ENCODE measurements at regions of chr4 and their contacts with region 1.

Region 1: DNA sequence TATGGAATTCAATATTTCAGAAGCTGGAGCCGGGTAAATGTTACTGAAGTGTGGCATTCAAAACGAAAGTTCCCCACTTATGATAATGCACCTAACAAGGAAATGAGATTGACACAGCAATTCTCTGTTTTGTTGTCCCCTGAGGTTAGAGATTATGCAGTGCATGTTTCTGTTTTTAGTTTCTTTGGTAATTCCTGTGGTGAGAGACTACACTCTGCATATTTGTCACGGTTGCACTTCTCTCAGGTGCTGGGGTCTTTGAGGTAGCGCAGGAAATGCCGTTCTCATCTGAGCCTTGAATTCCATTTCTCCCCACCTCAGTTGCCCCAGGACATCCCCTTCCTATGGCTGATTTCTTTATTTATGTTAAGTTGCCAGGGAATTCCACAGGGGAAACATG is 15.3 kb upstream of the BEND4 start:
- DNase-seq: no peak
- ATAC-seq: no peak
- H3K4me3 ChIP-seq: no peak overlapping the region
- H3K27ac ChIP-seq: no peak overlapping the region
- H3K4me1 ChIP-seq: no peaks in the 10 kb centered on the region
- H3K27me3 ChIP-seq: no peaks in the 10 kb centered on the region
- CTCF ChIP-seq: no peak

Region 2: DNA sequence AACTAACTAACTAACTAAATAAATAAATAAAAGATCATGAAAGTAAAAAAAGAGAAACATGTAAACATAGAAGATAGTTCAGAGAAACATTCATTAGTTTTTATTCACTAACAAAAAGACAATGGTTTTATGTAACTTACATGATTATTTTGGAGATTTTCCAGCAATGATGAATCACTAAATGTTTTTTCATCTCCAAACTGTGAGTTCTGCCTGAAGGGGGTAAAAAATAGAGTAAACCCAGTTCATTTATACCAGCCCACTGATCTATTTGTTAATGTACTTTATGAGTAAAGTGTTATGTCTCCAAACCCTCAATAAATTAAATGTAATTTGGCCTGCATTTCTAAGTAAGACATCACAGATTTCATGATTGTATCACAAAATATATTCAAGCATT is 388.1 kb after region 1 on chr4:
- CTCF ChIA-PET with region 1: no interaction called
- POLR2A ChIA-PET with region 1: interaction called, 11 read pairs
- intact Hi-C with region 1: no loop called
- DNase-seq: peak; percentile 78
- ATAC-seq: peak; percentile 64
- H3K4me3 ChIP-seq: no peak overlapping the region
- H3K27ac ChIP-seq: no peak overlapping the region
- H3K4me1 ChIP-seq: peaks cover 9% of the 10 kb centered on the region; the same call in 1 of the 2 replicates
- H3K27me3 ChIP-seq: no peaks in the 10 kb centered on the region
- CTCF ChIP-seq: no peak